Mammary epithelial cell (primary cell): ENCODE measurements at regions of chr10 and their contacts with region 1.

Region 1: DNA sequence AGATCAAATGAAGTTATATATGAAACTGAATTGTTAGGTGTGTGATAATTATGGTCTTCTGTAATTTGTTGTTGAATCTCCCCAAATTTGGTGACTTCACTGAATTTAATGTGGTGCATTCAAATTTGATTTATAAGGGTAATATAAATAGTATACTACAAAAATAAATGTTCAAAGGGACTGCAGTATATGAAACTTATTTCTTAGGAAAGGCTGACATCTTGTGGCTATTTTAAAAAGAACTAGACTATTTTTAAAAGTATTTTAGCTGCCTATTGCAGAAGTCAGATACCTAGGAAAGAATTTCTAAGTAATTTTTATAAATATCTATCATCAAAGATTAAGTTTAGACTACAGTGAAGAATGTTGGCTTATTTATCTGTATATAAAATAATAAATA is 36.6 kb downstream of the ATRNL1 start:
- DNase-seq: peak; percentile 4
- H3K4me3 ChIP-seq: no peak overlapping the region
- H3K27ac ChIP-seq: no peak overlapping the region
- H3K4me1 ChIP-seq: no peaks in the 10 kb centered on the region
- H3K27me3 ChIP-seq: no peaks in the 10 kb centered on the region
- CTCF ChIP-seq: peak in 1 of 2 donors; percentile 11

Region 2: DNA sequence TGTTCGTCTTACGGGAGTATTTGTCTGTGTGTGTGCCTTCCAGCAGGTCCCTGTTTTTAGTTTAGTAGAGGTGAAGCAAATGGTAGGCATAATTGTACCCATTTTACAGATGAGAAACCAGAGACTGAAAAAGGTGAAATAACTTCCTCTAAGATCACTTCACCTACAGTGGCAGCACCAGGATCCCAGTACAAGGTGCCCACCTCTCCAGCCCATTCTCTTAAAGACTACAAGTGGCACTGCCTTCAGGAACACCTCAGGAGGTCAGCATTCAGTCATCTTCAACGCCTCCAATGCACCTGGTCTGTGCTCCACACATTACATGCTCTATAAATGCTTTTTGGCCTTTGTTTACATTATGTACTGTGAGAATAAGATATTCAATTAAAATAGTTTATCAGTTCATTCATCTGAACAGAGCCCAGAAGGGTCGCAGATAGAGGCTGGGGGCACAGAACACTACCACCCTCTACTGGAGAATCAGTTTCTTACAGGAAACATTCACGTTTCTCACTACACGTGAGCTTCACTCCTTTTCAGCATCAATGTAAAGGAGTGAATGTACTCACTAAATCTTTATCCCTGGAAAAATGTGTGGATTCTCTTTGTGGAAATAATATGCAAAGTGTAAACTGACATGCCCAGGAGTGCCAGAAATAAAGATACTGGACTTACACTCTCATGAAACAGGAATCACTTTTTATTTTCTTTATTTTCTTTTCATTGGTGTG is 426.2 kb before region 1 on chr10:
- CTCF ChIA-PET with region 1: no interaction called
- dilution Hi-C with region 1: no loop called
- in situ Hi-C with region 1: no loop called
- intact Hi-C with region 1: loop called (anchors 2 kb)
- DNase-seq: no peak
- H3K4me3 ChIP-seq: no peak overlapping the region
- H3K27ac ChIP-seq: no peak overlapping the region
- H3K4me1 ChIP-seq: peaks cover 4% of the 10 kb centered on the region
- H3K27me3 ChIP-seq: no peaks in the 10 kb centered on the region
- CTCF ChIP-seq: peak; percentile 59 to 83